Breast epithelium (tissue), 4 donors: ENCODE measurements at regions of chr6 and their contacts with region 1.

Region 1: GRCh38 chr6:36196880-36197548 is 470 bp downstream of the BRPF3 start:
- DNase-seq: peak; percentile 96 to 99
- H3K4me3 ChIP-seq: peak overlapping the region; percentile 78 to 97 (median 87)
- H3K27ac ChIP-seq: peak overlapping the region; percentile 97 to 100
- H3K4me1 ChIP-seq: peaks cover 9 to 12% of the 10 kb centered on the region in 2 donors
- H3K27me3 ChIP-seq: no peaks in the 10 kb centered on the region
- CTCF ChIP-seq: no peak
- POLR2A ChIP-seq: peak; percentile 67

Region 2: DNA sequence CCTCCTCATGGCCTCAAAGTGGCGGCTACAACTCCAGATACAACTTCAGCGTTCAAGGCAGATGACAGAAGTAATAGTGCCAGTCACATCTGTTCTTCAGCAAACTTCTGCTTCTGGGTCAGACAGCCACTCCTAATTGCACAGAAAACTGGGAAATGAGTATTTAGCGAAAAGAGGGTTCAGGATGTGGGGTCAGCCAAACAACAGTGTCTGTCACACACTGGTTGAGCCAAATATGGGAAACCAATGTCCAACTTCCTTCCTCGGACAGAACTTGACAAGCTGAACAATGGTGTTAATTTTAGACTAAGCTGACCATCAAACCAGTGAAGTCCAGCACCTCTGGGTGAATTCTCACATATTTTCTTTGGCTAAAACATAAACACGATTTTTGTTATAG is 1826.7 kb before region 1 on chr6:
- intact Hi-C with region 1: no loop called
- DNase-seq: no peak
- H3K4me3 ChIP-seq: no peak overlapping the region
- H3K27ac ChIP-seq: no peak overlapping the region
- H3K4me1 ChIP-seq: no peaks in the 10 kb centered on the region
- H3K27me3 ChIP-seq: no peaks in the 10 kb centered on the region
- CTCF ChIP-seq: no peak
- POLR2A ChIP-seq: no peak

Region 3: GRCh38 chr6:36131511-36132245 is 65.3 kb before region 1 on chr6:
- intact Hi-C with region 1: loop called (anchors 5 kb)
- DNase-seq: no peak
- H3K4me3 ChIP-seq: peak overlapping the region; percentile 37 to 81 (median 59)
- H3K27ac ChIP-seq: peak overlapping the region; percentile 89 to 95
- H3K4me1 ChIP-seq: peaks cover 3% of the 10 kb centered on the region in 2 donors
- H3K27me3 ChIP-seq: no peaks in the 10 kb centered on the region
- CTCF ChIP-seq: no peak
- POLR2A ChIP-seq: no peak

Region 4: GRCh38 chr6:36142971-36143843 is 53.8 kb before region 1 on chr6:
- intact Hi-C with region 1: no loop called
- DNase-seq: no peak
- H3K4me3 ChIP-seq: no peak overlapping the region
- H3K27ac ChIP-seq: no peak overlapping the region
- H3K4me1 ChIP-seq: no peaks in the 10 kb centered on the region
- H3K27me3 ChIP-seq: no peaks in the 10 kb centered on the region
- CTCF ChIP-seq: no peak
- POLR2A ChIP-seq: no peak